K562 (cell line): ENCODE measurements at regions of chr2 and their contacts with region 1.

Region 1: GRCh38 chr2:176088048-176088936 is 4.2 kb upstream of the HOXD13 start:
- DNase-seq: peak; percentile 39 to 71 (median 56)
- ATAC-seq: peak; percentile 93
- H3K4me3 ChIP-seq: no peak overlapping the region
- H3K27ac ChIP-seq: no peak overlapping the region
- H3K4me1 ChIP-seq: peaks cover 0 to 29% of the 10 kb centered on the region in 2 experiments; a peak in 2 of 5 replicates
- H3K27me3 ChIP-seq: peaks cover 70 to 86% of the 10 kb centered on the region in 2 experiments
- CTCF ChIP-seq: peak; percentile 81 to 82 (median 81)
- EP300 ChIP-seq: no peak
- POLR2A ChIP-seq: no peak
- RAD21 ChIP-seq: peak; percentile 79 to 82

Region 2: GRCh38 chr2:175309799-175310198 is 778.5 kb before region 1 on chr2:
- CTCF ChIA-PET with region 1: no interaction called
- POLR2A ChIA-PET with region 1: no interaction called
- in situ Hi-C with region 1: no loop called
- intact Hi-C with region 1: loop called (anchors 2 kb)
- DNase-seq: peak; percentile 35 to 68 (median 43)
- ATAC-seq: peak; percentile 93
- H3K4me3 ChIP-seq: no peak overlapping the region
- H3K27ac ChIP-seq: no peak overlapping the region
- H3K4me1 ChIP-seq: no peaks in the 10 kb centered on the region; a peak in 1 of 5 replicates
- H3K27me3 ChIP-seq: peaks cover 0 to 3% of the 10 kb centered on the region in 2 experiments; a peak in 2 of 5 replicates
- CTCF ChIP-seq: peak; percentile 64 to 68 (median 65)
- EP300 ChIP-seq: no peak
- POLR2A ChIP-seq: no peak
- RAD21 ChIP-seq: peak; percentile 38 to 66; a peak in 3 of 4 replicates

Region 3: DNA sequence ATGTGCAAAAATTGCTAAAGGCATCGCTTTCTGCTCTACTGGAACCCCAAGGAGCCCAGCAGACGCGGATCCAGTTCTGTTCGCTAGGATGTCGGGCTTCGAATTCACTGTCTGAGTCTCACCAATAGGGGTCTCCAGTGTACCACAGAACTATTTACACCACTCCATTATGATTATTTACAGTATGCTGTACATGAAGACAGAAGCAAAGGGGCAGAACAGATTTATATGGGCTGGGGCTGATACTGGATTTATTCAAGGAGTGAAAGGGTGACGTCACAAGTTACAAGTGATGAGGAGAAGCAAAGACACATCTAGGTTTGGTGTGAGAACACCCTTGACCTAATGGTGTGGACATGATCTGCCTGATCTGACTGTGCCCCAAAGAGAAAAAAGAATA is 721.5 kb before region 1 on chr2:
- CTCF ChIA-PET with region 1: interaction called, 6 read pairs
- POLR2A ChIA-PET with region 1: no interaction called
- in situ Hi-C with region 1: no loop called
- intact Hi-C with region 1: loop called (anchors 1 kb)
- DNase-seq: peak; percentile 53 to 67 (median 62)
- ATAC-seq: peak; percentile 98
- H3K4me3 ChIP-seq: no peak overlapping the region
- H3K27ac ChIP-seq: no peak overlapping the region
- H3K4me1 ChIP-seq: no peaks in the 10 kb centered on the region
- H3K27me3 ChIP-seq: 0 out of 5 replicates have a peak, but pooled peaks cover 0 to 4% of the 10 kb centered on the region in 2 experiments
- CTCF ChIP-seq: peak; percentile 86 to 88 (median 88)
- EP300 ChIP-seq: no peak
- POLR2A ChIP-seq: no peak
- RAD21 ChIP-seq: peak; percentile 83 to 84

Region 4: GRCh38 chr2:175414882-175415487 is 673.3 kb before region 1 on chr2:
- CTCF ChIA-PET with region 1: interaction called, 3 read pairs
- POLR2A ChIA-PET with region 1: no interaction called
- in situ Hi-C with region 1: loop called (anchors 10 kb)
- intact Hi-C with region 1: loop called (anchors 2 kb)
- DNase-seq: peak; percentile 43 to 56 (median 50)
- ATAC-seq: peak; percentile 95
- H3K4me3 ChIP-seq: no peak overlapping the region
- H3K27ac ChIP-seq: no peak overlapping the region
- H3K4me1 ChIP-seq: peaks cover 6 to 10% of the 10 kb centered on the region in 2 experiments; a peak in 4 of 5 replicates
- H3K27me3 ChIP-seq: no peaks in the 10 kb centered on the region
- CTCF ChIP-seq: peak; percentile 68 to 73 (median 70)
- EP300 ChIP-seq: no peak
- POLR2A ChIP-seq: no peak
- RAD21 ChIP-seq: peak; percentile 55 to 71

Region 5: DNA sequence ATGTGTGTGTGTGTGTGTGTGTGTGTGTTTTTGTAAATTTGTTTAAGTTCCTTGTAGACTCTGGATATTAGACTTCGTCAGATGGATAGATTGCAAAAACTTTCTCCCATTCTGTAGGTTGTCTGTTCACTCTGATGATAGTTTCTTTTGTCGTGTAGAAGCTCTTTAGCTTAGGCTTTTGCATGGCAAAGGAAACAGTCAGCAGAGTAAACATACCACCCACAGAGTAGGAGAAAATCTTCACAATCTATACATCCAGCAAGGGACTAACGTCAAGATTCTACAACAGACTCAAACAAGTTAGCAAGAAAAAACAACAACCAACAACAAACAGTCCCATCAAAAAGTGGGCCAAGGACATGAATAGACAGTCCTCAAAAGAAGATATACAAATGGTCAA is 570.1 kb before region 1 on chr2:
- CTCF ChIA-PET with region 1: no interaction called
- POLR2A ChIA-PET with region 1: no interaction called
- in situ Hi-C with region 1: no loop called
- intact Hi-C with region 1: no loop called
- DNase-seq: no peak
- ATAC-seq: no peak
- H3K4me3 ChIP-seq: no peak overlapping the region
- H3K27ac ChIP-seq: no peak overlapping the region
- H3K4me1 ChIP-seq: no peaks in the 10 kb centered on the region
- H3K27me3 ChIP-seq: no peaks in the 10 kb centered on the region
- CTCF ChIP-seq: no peak
- EP300 ChIP-seq: no peak
- POLR2A ChIP-seq: no peak
- RAD21 ChIP-seq: no peak

Region 6: GRCh38 chr2:176234156-176234555 is 145.9 kb after region 1 on chr2:
- CTCF ChIA-PET with region 1: no interaction called
- POLR2A ChIA-PET with region 1: no interaction called
- in situ Hi-C with region 1: no loop called
- intact Hi-C with region 1: no loop called
- DNase-seq: no peak
- ATAC-seq: no peak
- H3K4me3 ChIP-seq: no peak overlapping the region
- H3K27ac ChIP-seq: no peak overlapping the region
- H3K4me1 ChIP-seq: no peaks in the 10 kb centered on the region; a peak in 1 of 5 replicates
- H3K27me3 ChIP-seq: peaks cover 0 to 11% of the 10 kb centered on the region in 2 experiments
- CTCF ChIP-seq: no peak
- EP300 ChIP-seq: no peak
- POLR2A ChIP-seq: no peak
- RAD21 ChIP-seq: no peak